Caco-2 (cell line): ENCODE measurements at regions of chr12 and their contacts with region 1.

Region 1: DNA sequence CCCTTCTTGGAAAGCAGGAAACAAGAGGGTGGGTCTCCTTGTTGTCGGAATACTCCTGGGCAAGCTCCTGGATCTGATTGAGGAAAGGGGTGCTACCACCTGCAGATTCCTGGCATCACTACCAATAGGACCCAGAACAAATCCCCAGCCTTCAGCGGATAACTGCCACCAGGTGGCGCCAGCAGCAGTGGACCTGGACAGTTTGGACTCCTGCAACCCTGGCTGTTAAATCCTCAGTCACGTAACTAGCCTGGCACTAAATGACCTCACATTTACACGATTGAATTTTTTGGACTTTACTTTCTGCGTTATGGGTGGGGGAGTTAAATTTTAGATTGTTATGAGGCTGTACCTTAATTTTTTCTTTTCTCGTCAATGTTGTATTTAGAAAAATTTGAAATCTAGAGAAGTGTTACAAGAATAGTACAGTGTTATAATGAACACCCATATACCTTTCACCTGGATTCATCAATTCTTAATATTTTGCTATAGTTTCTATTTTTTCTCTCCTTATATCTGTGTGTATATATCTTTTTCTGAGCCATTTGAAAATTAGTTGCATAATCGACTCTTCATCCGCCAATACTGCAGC is 95.6 kb downstream of the GAS2L3 start:
- DNase-seq: peak; percentile 74 to 83
- H3K4me3 ChIP-seq: no peak overlapping the region
- H3K4me3 Mint-ChIP-seq: no peak overlapping the region
- H3K27ac Mint-ChIP-seq: no peak overlapping the region
- H3K4me1 ChIP-seq: no peaks in the 10 kb centered on the region
- H3K4me1 Mint-ChIP-seq: no peaks in the 10 kb centered on the region
- H3K27me3 ChIP-seq: no peaks in the 10 kb centered on the region
- H3K27me3 Mint-ChIP-seq: peaks cover 7% of the 10 kb centered on the region
- CTCF ChIP-seq: peak; percentile 85 to 92

Region 2: DNA sequence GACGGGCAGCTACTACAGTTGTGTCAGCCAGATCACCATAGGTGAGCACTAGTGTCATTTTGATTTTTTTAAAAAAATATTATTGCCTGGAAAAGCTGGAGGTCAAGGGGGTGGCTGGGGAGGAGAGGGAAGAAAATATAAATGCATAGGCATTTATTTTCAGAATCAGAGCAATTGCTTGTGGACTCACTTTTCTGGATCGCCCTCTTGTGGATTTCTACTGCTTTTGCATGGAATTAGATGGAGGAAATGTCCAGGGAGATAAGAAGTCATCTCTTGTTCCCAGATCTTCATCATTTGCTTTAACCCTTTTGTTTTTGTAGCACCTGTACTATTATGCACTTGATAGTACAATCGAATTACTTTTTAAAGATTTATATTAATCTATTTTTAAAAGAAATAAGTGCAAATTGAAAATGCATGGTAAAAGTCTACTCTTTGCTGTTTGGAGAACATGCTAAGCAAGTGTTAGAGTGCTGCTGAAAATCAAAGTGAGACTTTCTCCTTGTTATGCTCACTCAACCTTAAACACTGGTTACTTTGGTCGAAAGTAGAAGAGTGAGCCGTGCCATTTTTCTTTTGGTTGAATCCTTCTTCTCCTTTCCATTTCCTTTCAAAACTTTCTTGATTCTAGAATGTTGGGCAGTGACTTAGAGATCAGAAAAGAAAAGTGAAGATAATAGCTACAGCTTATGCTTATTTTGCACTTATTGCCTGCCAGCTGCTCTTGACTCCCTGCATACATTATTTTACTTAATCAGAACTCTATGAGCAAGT is 65.0 kb after region 1 on chr12:
- CTCF ChIA-PET with region 1: no interaction called
- POLR2A ChIA-PET with region 1: no interaction called
- intact Hi-C with region 1: loop called (anchors 1 kb)
- DNase-seq: peak in 1 of 2 experiments; percentile 12
- H3K4me3 ChIP-seq: no peak overlapping the region
- H3K4me3 Mint-ChIP-seq: no peak overlapping the region
- H3K27ac Mint-ChIP-seq: no peak overlapping the region
- H3K4me1 ChIP-seq: no peaks in the 10 kb centered on the region
- H3K4me1 Mint-ChIP-seq: no peaks in the 10 kb centered on the region
- H3K27me3 ChIP-seq: no peaks in the 10 kb centered on the region
- H3K27me3 Mint-ChIP-seq: peaks cover 14% of the 10 kb centered on the region
- CTCF ChIP-seq: peak; percentile 58 to 69

Region 3: GRCh38 chr12:100741084-100741711 is 72.2 kb after region 1 on chr12:
- CTCF ChIA-PET with region 1: no interaction called
- POLR2A ChIA-PET with region 1: no interaction called
- intact Hi-C with region 1: loop called (anchors 1 kb)
- DNase-seq: peak in 1 of 2 experiments; percentile 35
- H3K4me3 ChIP-seq: no peak overlapping the region
- H3K4me3 Mint-ChIP-seq: no peak overlapping the region
- H3K27ac Mint-ChIP-seq: no peak overlapping the region
- H3K4me1 ChIP-seq: no peaks in the 10 kb centered on the region
- H3K4me1 Mint-ChIP-seq: no peaks in the 10 kb centered on the region
- H3K27me3 ChIP-seq: no peaks in the 10 kb centered on the region
- H3K27me3 Mint-ChIP-seq: peaks cover 3% of the 10 kb centered on the region
- CTCF ChIP-seq: peak; percentile 65 to 68

Region 4: GRCh38 chr12:101135920-101136319 is 466.9 kb after region 1 on chr12:
- CTCF ChIA-PET with region 1: no interaction called
- POLR2A ChIA-PET with region 1: no interaction called
- intact Hi-C with region 1: no loop called
- DNase-seq: no peak
- H3K4me3 ChIP-seq: no peak overlapping the region
- H3K4me3 Mint-ChIP-seq: no peak overlapping the region
- H3K27ac Mint-ChIP-seq: no peak overlapping the region
- H3K4me1 ChIP-seq: no peaks in the 10 kb centered on the region
- H3K4me1 Mint-ChIP-seq: no peaks in the 10 kb centered on the region
- H3K27me3 ChIP-seq: no peaks in the 10 kb centered on the region
- H3K27me3 Mint-ChIP-seq: peaks cover 9% of the 10 kb centered on the region
- CTCF ChIP-seq: no peak